Activated CD4-positive, alpha-beta T cell treated with anti-CD3 and anti-CD28 coated beads, Interleukin-2, amount 10 ng/mL, durations not matched to agents 7 days and 5 days (primary cell): ENCODE measurements at regions of chr11 and their contacts with region 1.

Region 1: GRCh38 chr11:103091801-103092524 is at the start of gene DCUN1D5:
- DNase-seq: peak; percentile 96
- H3K4me3 Mint-ChIP-seq: peak within 1 kb of the TSS; percentile 77
- H3K27ac Mint-ChIP-seq: peak within 1 kb of the TSS; percentile 93
- H3K4me1 Mint-ChIP-seq: peaks cover 25% of the 10 kb centered on the region
- H3K27me3 Mint-ChIP-seq: peaks cover 14% of the 10 kb centered on the region
- total RNA-seq, gene DCUN1D5: 22.1 to 24.9 TPM

Region 2: DNA sequence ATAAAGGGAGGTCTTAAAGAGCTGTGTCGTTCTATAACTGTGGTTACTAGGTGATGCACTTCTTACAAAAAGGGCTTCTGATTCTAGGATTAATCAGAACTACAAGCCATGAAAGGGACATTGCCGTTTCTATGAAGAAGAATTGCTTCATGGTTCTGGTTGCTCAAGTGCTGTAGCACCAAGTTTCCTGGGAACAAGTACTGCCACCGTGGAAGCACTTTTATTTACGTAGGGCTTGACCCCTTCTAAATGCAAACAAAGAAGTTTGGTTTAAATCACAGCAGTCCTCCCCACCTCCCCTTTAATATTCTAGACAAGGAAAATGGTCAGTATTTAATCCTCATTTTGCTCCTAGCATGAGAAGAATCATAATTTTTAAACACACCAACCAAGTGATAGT is 972.0 kb before region 1 on chr11:
- CTCF ChIA-PET with region 1: no interaction called
- POLR2A ChIA-PET with region 1: interaction called, 11 read pairs
- DNase-seq: no peak
- H3K4me3 Mint-ChIP-seq: no peak overlapping the region
- H3K27ac Mint-ChIP-seq: no peak overlapping the region
- H3K4me1 Mint-ChIP-seq: peaks cover 2% of the 10 kb centered on the region
- H3K27me3 Mint-ChIP-seq: peaks cover 37% of the 10 kb centered on the region

Region 3: GRCh38 chr11:103108933-103109817 is 17.2 kb after region 1 on chr11 and contains the start of gene DYNC2H1:
- CTCF ChIA-PET with region 1: interaction called, 31 read pairs
- POLR2A ChIA-PET with region 1: interaction called, 6 read pairs
- DNase-seq: peak; percentile 90
- H3K4me3 Mint-ChIP-seq: peak within 1 kb of the TSS; percentile 91
- H3K27ac Mint-ChIP-seq: peak within 1 kb of the TSS; percentile 91
- H3K4me1 Mint-ChIP-seq: peaks cover 14% of the 10 kb centered on the region
- H3K27me3 Mint-ChIP-seq: peaks cover 12% of the 10 kb centered on the region
- total RNA-seq, gene DYNC2H1: 0.92 to 1.3 TPM